Prostate gland (tissue), 2 donors: ENCODE measurements at regions of chr10 and their contacts with region 1.

Region 1: DNA sequence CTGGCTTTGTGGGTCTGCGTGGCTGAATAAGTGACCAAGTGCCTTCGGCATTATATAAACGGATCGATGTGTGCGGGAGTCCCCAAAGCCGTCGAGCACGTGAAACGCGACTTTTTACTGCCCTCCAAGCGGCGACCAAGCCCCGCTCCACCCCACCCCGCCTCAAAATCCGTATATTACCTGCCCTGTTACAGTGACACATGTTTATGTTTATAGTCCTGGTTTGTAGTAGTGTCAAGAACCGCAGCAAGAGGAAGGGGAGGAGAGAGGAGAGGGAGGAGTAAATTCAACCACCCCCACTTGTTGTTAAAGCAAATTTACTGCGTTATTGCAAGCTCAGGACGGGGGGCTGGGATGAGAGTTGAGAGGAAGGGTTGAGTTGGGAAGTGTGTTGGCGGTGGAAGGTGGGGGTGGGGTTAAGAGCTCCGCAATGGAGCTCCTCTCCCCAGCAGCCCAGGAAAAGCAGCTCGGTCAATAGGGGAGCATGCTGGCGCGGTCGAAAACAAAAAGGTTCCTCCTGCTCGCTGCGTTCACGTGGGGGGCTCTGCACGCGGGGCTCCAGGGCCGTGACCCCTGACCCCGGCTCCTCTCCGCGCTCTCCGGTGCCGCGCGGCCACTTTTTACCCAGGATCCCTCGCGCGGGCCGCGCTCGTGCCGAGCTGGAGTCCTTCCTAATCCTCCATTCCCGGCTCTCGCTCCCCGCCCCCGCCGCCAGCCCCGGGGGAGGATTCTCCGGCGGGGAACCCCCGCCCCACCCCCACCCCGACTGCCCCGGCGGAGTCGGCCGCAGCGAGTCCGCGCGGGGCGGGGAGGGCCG is at the start of gene SKIDA1:
- DNase-seq: peak; percentile 82
- H3K4me3 ChIP-seq: peak within 1 kb of the TSS; percentile 55 to 72
- H3K27ac ChIP-seq: peak within 1 kb of the TSS; percentile 97 to 99
- H3K4me1 ChIP-seq: no peaks in the 10 kb centered on the region
- H3K27me3 ChIP-seq: no peaks in the 10 kb centered on the region
- CTCF ChIP-seq: no peak
- POLR2A ChIP-seq: no peak
- total RNA-seq, gene SKIDA1: 1.5 to 4.3 TPM

Region 2: DNA sequence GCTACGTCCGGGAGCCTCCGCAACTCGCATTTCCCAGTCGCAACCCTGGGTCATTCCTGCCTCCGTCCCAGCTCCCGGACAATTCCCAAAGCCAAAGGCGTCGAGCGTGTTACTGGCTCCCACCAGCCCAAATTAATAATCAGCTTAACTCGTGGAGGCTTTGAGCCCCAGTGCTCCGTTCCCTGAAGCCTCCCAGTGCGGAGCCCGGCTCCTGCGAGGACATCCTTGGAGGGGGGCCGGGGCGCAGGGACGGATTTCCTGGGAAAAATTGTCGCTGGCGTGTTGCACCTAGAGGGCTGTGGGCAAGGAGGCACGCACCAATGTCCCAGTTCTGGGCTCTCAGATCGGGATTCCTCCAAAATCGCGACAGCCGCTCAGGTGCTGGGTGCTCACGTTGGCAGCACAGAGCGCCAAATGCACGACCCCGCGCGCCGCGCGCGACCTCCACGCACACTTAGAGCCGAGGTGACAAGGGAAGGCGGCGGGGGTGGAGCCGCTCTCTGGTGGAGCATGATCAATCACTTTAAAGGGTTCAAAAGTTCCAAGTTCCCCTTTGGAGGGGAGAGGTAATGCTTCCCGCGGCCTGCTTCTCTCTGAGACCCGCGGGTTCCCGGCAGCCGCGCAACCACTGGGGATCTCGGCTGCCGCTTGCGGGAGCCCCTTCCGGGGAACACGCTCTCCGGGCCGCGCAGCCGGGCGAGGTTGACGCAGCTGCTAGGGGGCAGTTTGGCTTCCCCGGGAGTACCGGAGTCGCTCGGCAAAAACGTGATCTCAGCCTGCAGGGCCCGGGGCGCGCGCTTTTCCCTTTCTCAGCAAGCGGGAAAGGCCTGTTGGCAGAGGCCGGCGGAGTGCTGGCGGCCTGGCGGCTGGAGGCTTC is 25.6 kb before region 1 on chr10:
- intact Hi-C with region 1: no loop called
- DNase-seq: no peak
- H3K4me3 ChIP-seq: no peak overlapping the region
- H3K27ac ChIP-seq: no peak overlapping the region
- H3K4me1 ChIP-seq: no peaks in the 10 kb centered on the region
- H3K27me3 ChIP-seq: no peaks in the 10 kb centered on the region
- CTCF ChIP-seq: no peak
- POLR2A ChIP-seq: no peak

Region 3: GRCh38 chr10:22251751-22252223 is 726.2 kb after region 1 on chr10:
- intact Hi-C with region 1: loop called (anchors 5 kb)
- DNase-seq: peak; percentile 54
- H3K4me3 ChIP-seq: peak overlapping the region; percentile 60 to 62
- H3K27ac ChIP-seq: peak overlapping the region; percentile 91 to 92
- H3K4me1 ChIP-seq: no peaks in the 10 kb centered on the region
- H3K27me3 ChIP-seq: no peaks in the 10 kb centered on the region
- CTCF ChIP-seq: peak in 1 of 4 experiments; percentile 2
- POLR2A ChIP-seq: no peak

Region 4: GRCh38 chr10:22325272-22326144 is 799.9 kb after region 1 on chr10:
- intact Hi-C with region 1: loop called (anchors 10 kb)
- DNase-seq: peak; percentile 67
- H3K4me3 ChIP-seq: peak overlapping the region; percentile 51 to 57
- H3K27ac ChIP-seq: peak overlapping the region; percentile 77 to 78
- H3K4me1 ChIP-seq: peaks cover 7% of the 10 kb centered on the region
- H3K27me3 ChIP-seq: no peaks in the 10 kb centered on the region
- CTCF ChIP-seq: no peak
- POLR2A ChIP-seq: no peak